ENCODE measurements at regions of chr10 and their contacts with region 1.

Region 1: GRCh38 chr10:93376372-93377293 is 105.5 kb downstream of the MYOF start:
- DNase-seq: no peak
- H3K4me3 ChIP-seq: peak overlapping the region in 1 of 2 donors; percentile 4
- H3K27ac ChIP-seq: peak overlapping the region; percentile 71
- H3K4me1 ChIP-seq: peaks cover 27% of the 10 kb centered on the region
- H3K27me3 ChIP-seq: no peaks in the 10 kb centered on the region
- CTCF ChIP-seq: peak; percentile 78 to 96 (median 92)
- POLR2A ChIP-seq: no peak

Region 2: DNA sequence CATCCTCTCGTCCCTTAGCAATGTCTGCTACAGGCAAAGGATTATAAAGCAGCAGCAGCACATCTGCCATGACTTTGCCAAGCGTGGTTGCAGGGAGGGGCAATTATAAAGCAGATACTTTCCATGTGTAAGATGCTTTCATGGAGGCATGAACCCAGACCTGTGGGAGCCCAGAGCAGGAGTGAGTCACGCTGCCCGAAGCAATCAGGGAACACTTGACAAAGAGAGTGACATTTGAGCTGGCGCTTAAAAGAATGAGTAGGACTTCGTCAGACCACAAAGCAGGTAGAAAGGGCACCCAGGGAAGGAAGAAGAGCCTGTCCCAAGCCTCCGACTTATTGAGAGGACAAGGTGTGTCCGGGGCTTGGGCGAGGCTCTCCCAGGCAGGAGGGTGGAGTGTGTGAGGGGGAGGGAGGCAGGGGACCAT is 41.7 kb before region 1 on chr10:
- intact Hi-C with region 1: no loop called
- DNase-seq: no peak
- H3K4me3 ChIP-seq: no peak overlapping the region
- H3K27ac ChIP-seq: no peak overlapping the region
- H3K4me1 ChIP-seq: no peaks in the 10 kb centered on the region
- H3K27me3 ChIP-seq: no peaks in the 10 kb centered on the region
- CTCF ChIP-seq: no peak
- POLR2A ChIP-seq: no peak

Region 3: GRCh38 chr10:93458821-93459257 is 82.2 kb after region 1 on chr10:
- intact Hi-C with region 1: no loop called
- DNase-seq: no peak
- H3K4me3 ChIP-seq: peak overlapping the region in 1 of 2 donors; percentile 1
- H3K27ac ChIP-seq: peak overlapping the region; percentile 94
- H3K4me1 ChIP-seq: peaks cover 80% of the 10 kb centered on the region
- H3K27me3 ChIP-seq: no peaks in the 10 kb centered on the region
- CTCF ChIP-seq: no peak
- POLR2A ChIP-seq: no peak

Region 4: DNA sequence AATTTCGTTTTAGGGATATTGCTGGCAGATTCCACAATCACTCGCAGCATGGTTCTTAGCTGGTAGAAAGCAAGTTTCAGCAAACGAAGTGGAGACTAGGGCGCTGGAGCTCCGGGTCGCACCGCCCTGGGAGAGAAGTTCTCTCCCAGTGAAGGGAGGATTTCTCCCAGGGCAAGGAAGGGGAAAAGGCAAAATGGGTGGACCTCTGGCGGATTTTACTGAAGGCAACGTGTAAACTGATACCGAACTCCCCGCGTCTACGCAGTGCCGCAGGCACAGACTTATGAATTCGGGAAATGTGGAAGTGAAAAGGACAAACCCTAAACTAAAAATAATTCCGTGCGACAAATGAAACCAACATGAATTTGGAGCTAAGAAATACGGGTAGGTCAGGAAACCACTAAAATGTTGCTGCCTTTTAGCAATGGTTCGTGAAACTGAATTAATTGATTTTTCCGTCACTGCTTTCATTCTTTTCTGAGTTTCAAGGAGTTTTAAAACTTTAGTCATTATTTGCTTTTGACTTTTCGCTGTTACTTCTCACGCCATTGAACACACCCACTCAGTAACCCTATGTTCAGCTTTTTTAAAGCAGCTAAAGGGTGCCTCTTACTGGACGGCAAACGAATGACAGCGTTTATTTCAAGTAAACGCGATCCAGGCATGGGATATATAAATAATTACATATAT is 105.7 kb after region 1 on chr10 and contains the start of gene MYOF:
- intact Hi-C with region 1: loop called (anchors 1 kb)
- DNase-seq: peak in 1 of 2 donors; percentile 91
- H3K4me3 ChIP-seq: peak within 1 kb of the TSS; percentile 54 to 62
- H3K27ac ChIP-seq: peak within 1 kb of the TSS; percentile 95
- H3K4me1 ChIP-seq: peaks cover 30% of the 10 kb centered on the region
- H3K27me3 ChIP-seq: no peaks in the 10 kb centered on the region
- CTCF ChIP-seq: peak in 2 of 3 experiments; percentile 46 to 62
- POLR2A ChIP-seq: peak in 1 of 2 donors; percentile 74
- total RNA-seq, gene MYOF: 107 TPM

Measured in vagina (tissue), 2 donors.